HepG2 (cell line): ENCODE measurements at regions of chr2 and their contacts with region 1.

Region 1: GRCh38 chr2:217713395-217714286 is 289.2 kb downstream of the TNS1 start:
- DNase-seq: peak; percentile 55
- ATAC-seq: peak; percentile 89
- H3K4me3 ChIP-seq: no peak overlapping the region
- H3K27ac ChIP-seq: no peak overlapping the region
- H3K4me1 ChIP-seq: no peaks in the 10 kb centered on the region
- H3K27me3 ChIP-seq: peaks cover 2 to 41% of the 10 kb centered on the region in 2 experiments; a peak in 3 of 5 replicates
- CTCF ChIP-seq: peak; percentile 97
- EP300 ChIP-seq: no peak
- POLR2A ChIP-seq: no peak
- RAD21 ChIP-seq: peak; percentile 93

Region 2: DNA sequence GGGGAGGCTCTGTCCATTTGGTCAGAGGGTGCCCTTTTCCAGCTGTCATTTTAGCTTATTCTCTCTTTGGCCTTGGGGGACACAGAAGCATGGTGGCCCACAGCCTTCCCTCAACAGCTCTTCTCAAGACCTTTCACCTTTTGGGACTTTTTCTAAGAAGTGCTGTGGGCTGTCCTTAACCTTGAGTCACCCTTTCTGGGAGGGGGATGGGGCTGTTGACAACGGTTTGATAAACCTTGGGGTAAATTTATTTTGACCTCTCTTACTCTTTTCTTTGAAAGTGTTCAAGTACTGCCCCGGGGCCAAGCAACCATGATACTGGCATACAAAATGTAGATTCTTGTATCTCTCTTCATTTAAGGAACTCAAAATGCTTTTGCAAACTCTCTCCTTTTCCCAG is 1032.0 kb before region 1 on chr2:
- CTCF ChIA-PET with region 1: interaction called, 9 read pairs
- POLR2A ChIA-PET with region 1: no interaction called
- in situ Hi-C with region 1: no loop called
- intact Hi-C with region 1: loop called (anchors 1 kb)
- DNase-seq: no peak
- ATAC-seq: no peak
- H3K4me3 ChIP-seq: no peak overlapping the region
- H3K27ac ChIP-seq: no peak overlapping the region
- H3K4me1 ChIP-seq: no peaks in the 10 kb centered on the region
- H3K27me3 ChIP-seq: peaks cover 3 to 45% of the 10 kb centered on the region in 2 experiments; a peak in 4 of 5 replicates
- CTCF ChIP-seq: no peak
- EP300 ChIP-seq: no peak
- POLR2A ChIP-seq: no peak
- RAD21 ChIP-seq: no peak

Region 3: DNA sequence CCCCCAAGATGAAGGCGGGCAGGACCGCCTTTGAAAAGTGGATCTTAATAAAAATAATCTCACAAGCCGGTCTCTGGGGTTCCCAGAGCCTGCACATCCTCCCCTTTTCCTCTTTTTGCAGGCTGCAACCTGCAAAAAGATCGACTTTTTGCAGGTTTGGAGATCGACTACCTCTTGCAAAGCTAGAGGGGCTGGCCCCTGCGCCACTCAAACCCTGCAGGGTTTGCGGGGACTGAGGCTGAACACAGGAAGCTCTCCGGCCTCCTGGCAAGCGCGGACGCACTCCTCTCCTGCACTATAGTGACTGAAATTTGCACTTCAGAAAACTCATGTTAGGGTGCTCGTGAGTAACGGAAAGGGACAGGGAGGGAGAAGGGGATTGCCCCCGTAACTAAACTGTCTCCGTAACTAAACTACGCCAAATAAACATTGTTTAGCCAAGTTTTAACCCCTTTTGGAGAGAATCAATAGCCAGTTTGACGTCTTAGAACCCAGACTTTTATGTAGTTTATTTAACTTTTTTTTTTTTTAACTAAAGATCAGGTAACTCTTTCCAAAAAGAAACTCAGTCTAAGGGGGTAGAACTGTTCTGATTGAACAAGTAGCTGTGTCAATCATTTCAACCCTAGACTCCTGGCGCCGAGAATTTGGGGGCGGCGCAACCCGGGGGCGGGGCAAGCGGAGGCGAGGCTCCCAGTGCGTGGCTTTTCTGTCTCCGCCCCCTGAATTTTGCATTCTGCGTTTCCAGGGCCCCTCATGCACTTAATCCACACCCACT is 1020.8 kb before region 1 on chr2:
- CTCF ChIA-PET with region 1: interaction called, 3 read pairs
- POLR2A ChIA-PET with region 1: no interaction called
- in situ Hi-C with region 1: loop called (anchors 5 kb)
- intact Hi-C with region 1: loop called (anchors 5 kb)
- DNase-seq: no peak
- ATAC-seq: no peak
- H3K4me3 ChIP-seq: no peak overlapping the region
- H3K27ac ChIP-seq: no peak overlapping the region
- H3K4me1 ChIP-seq: no peaks in the 10 kb centered on the region
- H3K27me3 ChIP-seq: peaks cover 30 to 80% of the 10 kb centered on the region in 2 experiments
- CTCF ChIP-seq: no peak
- EP300 ChIP-seq: no peak
- POLR2A ChIP-seq: no peak
- RAD21 ChIP-seq: no peak

Region 4: GRCh38 chr2:216777650-216778273 is 935.9 kb before region 1 on chr2:
- CTCF ChIA-PET with region 1: interaction called, 7 read pairs
- POLR2A ChIA-PET with region 1: no interaction called
- in situ Hi-C with region 1: no loop called
- intact Hi-C with region 1: loop called (anchors 1 kb)
- DNase-seq: peak; percentile 89
- ATAC-seq: peak; percentile 98
- H3K4me3 ChIP-seq: no peak overlapping the region
- H3K27ac ChIP-seq: no peak overlapping the region
- H3K4me1 ChIP-seq: peaks cover 16% of the 10 kb centered on the region
- H3K27me3 ChIP-seq: peaks cover 0 to 16% of the 10 kb centered on the region in 2 experiments; a peak in 2 of 5 replicates
- CTCF ChIP-seq: peak; percentile 88
- EP300 ChIP-seq: peak in 1 of 2 experiments; percentile 42; a peak in 1 of 4 replicates
- POLR2A ChIP-seq: no peak
- RAD21 ChIP-seq: peak; percentile 87

Region 5: GRCh38 chr2:217142649-217143266 is 570.9 kb before region 1 on chr2:
- CTCF ChIA-PET with region 1: no interaction called
- POLR2A ChIA-PET with region 1: no interaction called
- in situ Hi-C with region 1: no loop called
- intact Hi-C with region 1: loop called (anchors 10 kb)
- DNase-seq: peak; percentile 38
- ATAC-seq: peak; percentile 64
- H3K4me3 ChIP-seq: no peak overlapping the region
- H3K27ac ChIP-seq: no peak overlapping the region
- H3K4me1 ChIP-seq: no peaks in the 10 kb centered on the region
- H3K27me3 ChIP-seq: 0 out of 5 replicates have a peak, but pooled peaks cover 0 to under 1% of the 10 kb centered on the region in 2 experiments
- CTCF ChIP-seq: peak; percentile 76
- EP300 ChIP-seq: no peak
- POLR2A ChIP-seq: no peak
- RAD21 ChIP-seq: peak; percentile 55; the same call in 1 of the 2 replicates

Region 6: GRCh38 chr2:217610401-217611075 is 103.1 kb before region 1 on chr2:
- CTCF ChIA-PET with region 1: no interaction called
- POLR2A ChIA-PET with region 1: no interaction called
- in situ Hi-C with region 1: no loop called
- intact Hi-C with region 1: no loop called
- DNase-seq: no peak
- ATAC-seq: peak; percentile 38
- H3K4me3 ChIP-seq: no peak overlapping the region
- H3K27ac ChIP-seq: no peak overlapping the region
- H3K4me1 ChIP-seq: no peaks in the 10 kb centered on the region
- H3K27me3 ChIP-seq: peaks cover 2% of the 10 kb centered on the region in 2 experiments; a peak in 2 of 5 replicates
- CTCF ChIP-seq: no peak
- EP300 ChIP-seq: no peak
- POLR2A ChIP-seq: no peak
- RAD21 ChIP-seq: no peak

Region 7: DNA sequence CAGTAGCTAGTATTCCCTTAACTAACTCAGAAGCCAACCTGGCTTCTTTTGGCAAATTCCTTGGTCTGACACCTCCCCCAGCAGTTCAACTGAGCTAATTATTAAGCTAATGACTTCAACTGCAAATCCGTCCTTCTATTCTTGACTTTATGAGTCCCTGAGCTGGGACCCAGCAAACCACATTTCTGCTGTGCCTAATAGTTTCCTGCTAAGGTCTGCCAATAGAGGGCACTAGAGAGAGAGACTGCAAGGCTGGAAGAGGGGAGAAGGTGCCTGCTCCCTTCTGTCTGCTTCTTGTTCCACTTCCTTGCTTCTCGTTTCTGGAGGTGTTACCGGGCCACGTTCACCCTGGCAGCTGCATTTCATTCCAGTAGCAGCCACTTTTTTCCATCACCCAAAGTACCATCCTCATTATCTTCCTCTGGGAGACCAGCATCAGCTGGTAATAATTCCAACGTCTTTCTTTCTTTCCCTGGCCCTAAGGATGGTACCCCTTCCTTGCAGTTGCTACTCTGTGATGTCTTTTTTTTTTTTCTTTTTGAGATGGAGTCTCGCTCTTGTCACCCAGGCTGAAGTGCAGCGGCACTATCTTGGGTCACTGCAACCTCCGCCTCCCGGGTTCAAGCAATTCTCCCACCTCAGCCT is 62.8 kb before region 1 on chr2:
- CTCF ChIA-PET with region 1: interaction called, 9 read pairs
- POLR2A ChIA-PET with region 1: no interaction called
- in situ Hi-C with region 1: no loop called
- intact Hi-C with region 1: loop called (anchors 1 kb)
- DNase-seq: peak; percentile 59
- ATAC-seq: peak; percentile 92
- H3K4me3 ChIP-seq: no peak overlapping the region
- H3K27ac ChIP-seq: no peak overlapping the region
- H3K4me1 ChIP-seq: peaks cover 9% of the 10 kb centered on the region
- H3K27me3 ChIP-seq: peaks cover 0 to 12% of the 10 kb centered on the region in 2 experiments; a peak in 2 of 5 replicates
- CTCF ChIP-seq: peak; percentile 82
- EP300 ChIP-seq: no peak
- POLR2A ChIP-seq: no peak
- RAD21 ChIP-seq: no peak

Region 8: DNA sequence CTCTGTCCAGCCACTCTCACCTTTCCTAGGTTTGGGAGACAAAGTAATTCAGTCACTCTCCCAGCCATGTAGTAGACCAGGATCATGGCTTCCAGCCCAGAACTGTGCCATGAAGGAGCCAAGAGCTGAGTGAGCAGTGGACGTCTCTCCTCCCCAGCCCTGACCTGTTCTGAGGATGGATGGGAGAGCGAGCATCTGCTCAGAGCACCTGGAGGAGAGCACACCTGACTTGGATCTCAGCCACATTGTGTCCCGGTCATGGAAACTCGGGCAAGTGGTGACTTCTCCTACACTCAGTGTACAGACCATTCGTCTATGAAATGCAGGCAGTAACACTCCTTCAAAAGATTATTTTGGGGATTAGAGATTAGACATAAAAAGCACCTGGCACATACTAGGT is 10.5 kb before region 1 on chr2:
- CTCF ChIA-PET with region 1: no interaction called
- POLR2A ChIA-PET with region 1: no interaction called
- in situ Hi-C with region 1: no loop called
- intact Hi-C with region 1: no loop called
- DNase-seq: no peak
- ATAC-seq: no peak
- H3K4me3 ChIP-seq: no peak overlapping the region
- H3K27ac ChIP-seq: no peak overlapping the region
- H3K4me1 ChIP-seq: no peaks in the 10 kb centered on the region
- H3K27me3 ChIP-seq: peaks cover under 1 to 6% of the 10 kb centered on the region in 2 experiments; a peak in 3 of 5 replicates
- CTCF ChIP-seq: no peak
- EP300 ChIP-seq: no peak
- POLR2A ChIP-seq: no peak
- RAD21 ChIP-seq: no peak

Region 9: DNA sequence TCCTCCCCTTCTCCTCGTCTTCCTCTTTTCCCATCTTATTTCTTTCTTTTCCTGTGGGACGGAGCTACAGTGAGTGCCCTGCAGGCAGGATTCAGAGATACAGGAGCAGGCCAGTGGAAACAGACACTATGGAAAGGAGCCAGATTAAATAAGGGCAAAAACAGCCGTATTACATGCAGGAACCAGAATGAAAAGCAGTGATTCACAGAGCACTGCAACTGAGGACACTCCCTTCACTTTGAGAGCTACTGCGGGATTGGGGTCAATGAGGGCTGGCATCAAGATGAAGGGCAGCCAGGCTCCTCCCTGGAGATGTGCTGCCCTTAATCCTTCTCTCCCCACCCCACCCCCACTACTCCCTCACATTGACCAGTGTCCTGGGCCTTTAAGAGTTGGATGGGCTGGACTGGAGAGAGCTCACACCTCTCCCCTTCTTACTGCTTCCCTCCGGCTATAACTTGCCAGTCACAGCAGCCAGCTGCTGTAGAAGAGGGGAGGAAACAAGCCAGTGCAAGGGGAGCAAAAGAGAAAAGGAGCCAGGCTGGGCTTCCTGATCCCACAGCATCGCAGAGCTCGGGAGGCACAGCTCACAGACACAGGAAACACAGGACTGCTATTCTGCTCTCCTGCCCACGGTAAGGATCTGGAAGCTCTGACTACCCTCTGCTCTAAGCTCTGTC is 893.9 kb after region 1 on chr2 and contains the start of gene PLCD4:
- CTCF ChIA-PET with region 1: no interaction called
- POLR2A ChIA-PET with region 1: no interaction called
- in situ Hi-C with region 1: no loop called
- intact Hi-C with region 1: no loop called
- DNase-seq: no peak
- ATAC-seq: peak; percentile 50
- H3K4me3 ChIP-seq: no peak within 1 kb of the TSS
- H3K27ac ChIP-seq: no peak within 1 kb of the TSS
- H3K4me1 ChIP-seq: no peaks in the 10 kb centered on the region
- H3K27me3 ChIP-seq: peaks cover 1 to 22% of the 10 kb centered on the region in 2 experiments; a peak in 3 of 5 replicates
- CTCF ChIP-seq: no peak
- EP300 ChIP-seq: no peak
- POLR2A ChIP-seq: no peak
- RAD21 ChIP-seq: no peak
- total RNA-seq, gene PLCD4: not detected in 2 replicates